Right ventricle myocardium inferior (tissue), 1 donor: ENCODE measurements at regions of chr2 and their contacts with region 1.

Region 1: DNA sequence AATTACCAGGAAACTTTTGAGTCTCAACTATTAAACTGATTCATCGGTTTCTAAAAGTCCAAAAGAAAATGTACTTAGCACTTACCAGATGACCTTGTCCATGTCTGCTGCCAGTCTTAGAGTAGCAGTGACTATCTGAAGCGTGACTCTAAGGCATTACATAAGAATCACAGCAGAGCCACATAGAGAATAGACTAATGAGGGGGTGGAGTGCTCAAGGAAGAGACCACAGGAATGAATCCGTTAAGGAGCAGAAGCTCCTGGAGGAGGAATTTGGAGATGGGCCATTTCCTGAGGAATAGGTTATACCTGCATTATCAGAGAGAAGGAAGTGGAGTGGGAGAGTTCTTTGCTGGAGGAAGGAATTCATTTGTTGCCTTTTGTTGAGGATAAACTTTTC is 116.0 kb downstream of the MAP3K20 start:
- DNase-seq: no peak
- ATAC-seq: no peak

Region 2: GRCh38 chr2:172986040-172986439 is 205.6 kb before region 1 on chr2:
- intact Hi-C with region 1: no loop called
- DNase-seq: no peak
- ATAC-seq: no peak

Region 3: DNA sequence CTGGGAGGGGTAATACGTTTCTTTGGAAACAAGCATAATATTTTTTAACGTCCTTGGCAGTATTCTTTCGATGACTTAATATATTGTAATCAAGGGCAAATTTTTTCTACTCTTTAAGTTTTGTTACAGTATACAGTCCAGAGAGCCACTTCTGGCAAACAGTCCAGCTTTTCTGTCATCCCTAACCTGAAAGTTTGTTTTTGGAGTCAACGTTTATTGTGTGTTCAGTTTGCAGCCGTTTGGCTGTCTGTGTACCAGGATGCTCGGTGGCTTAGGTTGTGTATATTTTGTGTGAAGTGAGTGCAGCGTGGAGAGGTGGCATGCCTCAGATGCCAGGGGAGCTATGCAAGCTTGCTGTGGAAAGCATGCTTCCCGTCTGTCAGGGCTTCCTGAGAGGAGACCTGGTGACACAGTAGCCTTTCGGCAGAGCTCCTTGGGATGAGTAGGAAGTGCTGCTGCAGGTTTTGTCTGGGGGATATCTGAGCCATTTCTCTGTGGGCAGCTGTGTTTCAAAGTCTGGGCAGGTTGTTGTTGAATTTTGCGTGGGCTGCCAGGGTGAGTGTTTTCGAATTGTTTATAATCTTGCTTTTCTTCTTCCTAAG is 101.2 kb before region 1 on chr2:
- intact Hi-C with region 1: loop called (anchors 5 kb)
- DNase-seq: no peak
- ATAC-seq: peak; percentile 82

Region 4: GRCh38 chr2:173134703-173135102 is 56.9 kb before region 1 on chr2:
- intact Hi-C with region 1: loop called (anchors 5 kb)
- DNase-seq: no peak
- ATAC-seq: no peak